ENCODE measurements at regions of chr19 and their contacts with region 1.

Region 1: GRCh38 chr19:17266975-17267788 is at the start of gene BABAM1:
- DNase-seq: peak; percentile 100
- ATAC-seq: peak; percentile 97
- H3K4me3 ChIP-seq: peak within 1 kb of the TSS; percentile 93
- H3K27ac ChIP-seq: peak within 1 kb of the TSS; percentile 81
- H3K4me1 ChIP-seq: peaks cover 11% of the 10 kb centered on the region
- H3K27me3 ChIP-seq: no peaks in the 10 kb centered on the region
- CTCF ChIP-seq: no peak
- EP300 ChIP-seq: no peak
- POLR2A ChIP-seq: peak; percentile 84
- RAD21 ChIP-seq: no peak
- polyA plus RNA-seq, gene BABAM1: 11.9 to 37.4 TPM

Region 2: GRCh38 chr19:16771618-16772017 is 495.6 kb before region 1 on chr19:
- CTCF ChIA-PET with region 1: interaction called, 6 read pairs
- POLR2A ChIA-PET with region 1: no interaction called
- RAD21 ChIA-PET with region 1: no interaction called
- SMC1A ChIA-PET with region 1: no interaction called
- in situ Hi-C with region 1: no loop called
- intact Hi-C with region 1: loop called (anchors 10 kb)
- DNase-seq: peak; percentile 16
- ATAC-seq: peak; percentile 85
- H3K4me3 ChIP-seq: no peak overlapping the region
- H3K27ac ChIP-seq: no peak overlapping the region
- H3K4me1 ChIP-seq: no peaks in the 10 kb centered on the region
- H3K27me3 ChIP-seq: no peaks in the 10 kb centered on the region
- CTCF ChIP-seq: peak; percentile 73 to 78 (median 75)
- EP300 ChIP-seq: no peak
- POLR2A ChIP-seq: no peak
- RAD21 ChIP-seq: peak; percentile 76

Region 3: DNA sequence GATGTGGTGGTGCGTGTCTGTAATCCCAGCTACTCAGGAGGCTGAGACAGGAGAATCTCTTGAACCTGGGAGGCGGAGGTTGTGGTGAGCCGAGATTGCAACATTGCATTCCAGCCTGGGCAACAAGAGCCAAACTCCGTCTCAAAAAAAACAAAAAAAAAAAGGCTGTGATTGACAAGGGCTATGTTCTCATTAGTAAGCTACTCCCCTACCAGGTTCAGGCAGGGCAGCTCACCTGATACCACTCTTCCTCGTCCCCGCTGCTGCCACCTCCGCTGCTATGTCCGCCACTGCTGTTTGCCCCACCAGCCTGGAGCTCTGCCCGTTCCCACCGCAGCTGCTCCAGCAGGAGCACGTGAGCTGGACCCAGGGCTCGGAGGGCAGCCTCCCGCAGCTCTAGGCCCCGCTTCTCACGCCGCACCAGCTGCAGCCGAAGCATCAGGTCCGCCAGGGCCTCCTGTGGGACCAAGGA is 12.0 kb before region 1 on chr19:
- CTCF ChIA-PET with region 1: interaction called, 14 read pairs
- POLR2A ChIA-PET with region 1: interaction called, 3 read pairs
- RAD21 ChIA-PET with region 1: interaction called, 7 read pairs
- SMC1A ChIA-PET with region 1: no interaction called
- in situ Hi-C with region 1: no loop called
- intact Hi-C with region 1: no loop called
- DNase-seq: no peak
- ATAC-seq: no peak
- H3K4me3 ChIP-seq: no peak overlapping the region
- H3K27ac ChIP-seq: no peak overlapping the region
- H3K4me1 ChIP-seq: no peaks in the 10 kb centered on the region
- H3K27me3 ChIP-seq: no peaks in the 10 kb centered on the region
- CTCF ChIP-seq: no peak
- EP300 ChIP-seq: no peak
- POLR2A ChIP-seq: no peak
- RAD21 ChIP-seq: no peak

Region 4: GRCh38 chr19:17282488-17283255 is 15.5 kb after region 1 on chr19:
- CTCF ChIA-PET with region 1: interaction called, 120 read pairs
- POLR2A ChIA-PET with region 1: interaction called, 16 read pairs
- RAD21 ChIA-PET with region 1: interaction called, 22 read pairs
- SMC1A ChIA-PET with region 1: interaction called, 43 read pairs
- in situ Hi-C with region 1: no loop called
- intact Hi-C with region 1: loop called (anchors 2 kb)
- DNase-seq: peak; percentile 46
- ATAC-seq: peak; percentile 92
- H3K4me3 ChIP-seq: peak overlapping the region; percentile 85
- H3K27ac ChIP-seq: peak overlapping the region; percentile 68
- H3K4me1 ChIP-seq: peaks cover 9% of the 10 kb centered on the region
- H3K27me3 ChIP-seq: no peaks in the 10 kb centered on the region
- CTCF ChIP-seq: peak; percentile 90 to 96 (median 94); a peak in 5 of 6 replicates
- EP300 ChIP-seq: no peak
- POLR2A ChIP-seq: peak; percentile 58
- RAD21 ChIP-seq: peak; percentile 79